Activated CD4-positive, alpha-beta T cell treated with anti-CD3 and anti-CD28 coated beads for 36 hours (primary cell): ENCODE measurements at regions of chr18 and their contacts with region 1.

Region 1: GRCh38 chr18:49161627-49162026 is 210.9 kb upstream of the SMAD7 start:
- DNase-seq: peak; percentile 57
- ATAC-seq: peak; percentile 98
- H3K4me3 Mint-ChIP-seq: no peak overlapping the region
- H3K27ac Mint-ChIP-seq: no peak overlapping the region
- H3K4me1 Mint-ChIP-seq: peaks cover 3% of the 10 kb centered on the region
- H3K27me3 Mint-ChIP-seq: no peaks in the 10 kb centered on the region

Region 2: DNA sequence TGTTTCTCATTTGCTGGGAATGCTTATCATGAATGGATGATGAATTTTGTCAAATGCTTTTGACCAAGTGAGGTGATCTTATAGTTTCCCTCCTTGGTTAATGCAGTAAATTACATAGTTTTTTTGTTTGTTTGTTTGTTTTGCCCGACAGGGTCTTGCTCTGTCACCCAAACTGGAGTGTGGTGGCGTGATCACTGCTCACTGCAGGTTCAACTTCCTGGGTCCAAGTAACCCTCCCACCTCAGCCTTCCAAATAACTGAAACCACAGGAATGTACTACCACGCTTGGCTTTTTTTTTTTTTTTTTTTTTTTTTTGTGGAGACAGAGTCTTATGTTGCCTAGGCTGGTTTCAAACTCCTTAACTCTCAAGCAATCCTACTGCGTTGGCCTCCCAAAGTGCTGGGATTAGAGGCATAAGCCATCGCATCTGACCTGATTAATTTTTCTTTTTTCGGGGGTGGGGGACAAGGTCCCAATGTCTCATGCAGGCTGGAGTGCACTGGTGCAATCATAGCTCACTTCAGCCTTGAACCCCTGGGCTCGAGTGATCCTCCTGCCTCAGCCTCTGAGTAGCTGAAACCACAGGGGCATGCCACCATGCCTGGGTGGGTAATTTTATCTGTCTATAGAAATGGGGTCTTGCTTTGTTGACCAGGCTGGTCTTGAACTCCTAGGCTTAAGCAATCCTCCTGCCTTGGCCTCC is 1279.7 kb before region 1 on chr18:
- CTCF ChIA-PET with region 1: no interaction called
- POLR2A ChIA-PET with region 1: no interaction called
- intact Hi-C with region 1: no loop called
- DNase-seq: no peak
- ATAC-seq: no peak
- H3K4me3 Mint-ChIP-seq: no peak overlapping the region
- H3K27ac Mint-ChIP-seq: no peak overlapping the region
- H3K4me1 Mint-ChIP-seq: peaks cover 39% of the 10 kb centered on the region
- H3K27me3 Mint-ChIP-seq: no peaks in the 10 kb centered on the region

Region 3: DNA sequence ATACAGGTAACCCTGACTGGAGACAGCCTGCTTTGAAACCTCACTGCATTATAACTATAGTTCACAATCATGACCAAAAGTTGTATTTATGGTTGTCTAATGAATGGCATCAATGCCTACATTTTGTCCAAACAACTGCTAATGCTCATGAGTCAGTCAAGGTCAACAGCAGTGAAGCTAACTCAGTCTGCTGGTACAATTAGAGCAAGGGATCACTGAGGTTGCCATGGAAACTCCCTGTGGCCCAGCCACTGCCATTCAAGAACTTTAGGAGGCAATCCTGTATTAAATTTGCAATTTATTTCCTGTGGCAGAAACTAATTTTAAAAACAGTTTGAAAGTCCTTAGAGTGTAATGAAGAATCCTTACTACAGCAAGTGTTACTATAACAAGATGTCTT is 25.8 kb before region 1 on chr18:
- CTCF ChIA-PET with region 1: no interaction called
- POLR2A ChIA-PET with region 1: no interaction called
- intact Hi-C with region 1: no loop called
- DNase-seq: no peak
- ATAC-seq: no peak
- H3K4me3 Mint-ChIP-seq: no peak overlapping the region
- H3K27ac Mint-ChIP-seq: no peak overlapping the region
- H3K4me1 Mint-ChIP-seq: no peaks in the 10 kb centered on the region
- H3K27me3 Mint-ChIP-seq: no peaks in the 10 kb centered on the region

Region 4: DNA sequence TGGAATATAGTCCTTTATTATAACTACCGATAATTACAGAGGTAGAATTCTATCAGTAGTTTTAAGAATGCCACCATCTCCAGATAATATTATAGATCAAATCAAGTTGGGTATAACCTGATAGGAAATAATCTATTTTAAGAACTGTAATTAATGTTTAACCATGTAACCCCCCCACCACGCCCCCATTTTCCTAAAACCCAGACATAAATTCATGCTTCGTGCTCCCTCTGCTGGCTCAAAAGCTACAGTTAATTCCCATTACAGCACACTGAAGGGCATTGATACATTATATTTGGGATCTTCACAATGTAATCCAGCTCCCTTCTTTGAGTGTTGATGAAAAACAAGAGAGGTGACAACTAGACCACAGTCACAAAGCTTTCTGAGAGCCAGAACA is 17.1 kb after region 1 on chr18:
- CTCF ChIA-PET with region 1: interaction called, 3 read pairs
- POLR2A ChIA-PET with region 1: interaction called, 3 read pairs
- intact Hi-C with region 1: loop called (anchors 1 to 2 kb)
- DNase-seq: peak; percentile 17
- ATAC-seq: no peak
- H3K4me3 Mint-ChIP-seq: no peak overlapping the region
- H3K27ac Mint-ChIP-seq: no peak overlapping the region
- H3K4me1 Mint-ChIP-seq: peaks cover 21% of the 10 kb centered on the region
- H3K27me3 Mint-ChIP-seq: no peaks in the 10 kb centered on the region

Region 5: DNA sequence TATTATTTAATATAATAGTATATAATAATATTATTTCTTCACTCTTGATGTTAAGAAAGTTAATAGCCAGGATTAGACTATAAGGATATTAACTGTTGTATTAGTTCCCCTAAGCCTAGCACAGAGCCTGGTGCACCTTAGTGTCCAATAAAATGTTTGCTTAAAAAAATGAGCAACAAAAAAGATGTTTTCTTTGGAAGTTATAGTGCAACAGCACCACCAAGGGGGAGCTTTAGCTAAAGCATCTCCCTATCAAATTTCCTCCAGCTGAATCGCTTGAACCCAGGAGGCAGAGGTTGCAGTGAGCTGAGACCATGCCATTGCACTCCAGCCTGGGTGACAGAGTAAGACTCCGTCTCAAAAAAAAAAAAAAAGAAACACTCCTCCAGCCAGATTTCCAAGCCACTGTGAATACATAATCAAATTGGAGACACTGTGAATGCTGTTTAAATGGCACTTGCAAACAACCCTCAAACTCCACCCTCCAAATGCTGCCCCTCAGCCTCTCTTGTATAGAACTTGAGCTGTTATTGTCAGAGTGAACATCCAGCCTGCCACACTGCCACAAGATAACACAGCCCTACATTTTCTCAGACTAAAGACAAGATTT is 76.9 kb after region 1 on chr18:
- CTCF ChIA-PET with region 1: no interaction called
- POLR2A ChIA-PET with region 1: no interaction called
- intact Hi-C with region 1: no loop called
- DNase-seq: peak; percentile 17
- ATAC-seq: no peak
- H3K4me3 Mint-ChIP-seq: no peak overlapping the region
- H3K27ac Mint-ChIP-seq: no peak overlapping the region
- H3K4me1 Mint-ChIP-seq: no peaks in the 10 kb centered on the region
- H3K27me3 Mint-ChIP-seq: no peaks in the 10 kb centered on the region